Pancreas (tissue), 10 donors: ENCODE measurements at regions of chr1 and their contacts with region 1.

Region 1: GRCh38 chr1:180851995-180852887 is 60.5 kb upstream of the KIAA1614 start:
- DNase-seq: no peak
- ATAC-seq: no peak
- H3K4me3 ChIP-seq: no peak overlapping the region
- H3K27ac ChIP-seq: no peak overlapping the region
- H3K4me1 ChIP-seq: peaks cover 8 to 45% (median 40%) of the 10 kb centered on the region in 3 donors
- H3K27me3 ChIP-seq: no peaks in the 10 kb centered on the region
- CTCF ChIP-seq: no peak

Region 2: DNA sequence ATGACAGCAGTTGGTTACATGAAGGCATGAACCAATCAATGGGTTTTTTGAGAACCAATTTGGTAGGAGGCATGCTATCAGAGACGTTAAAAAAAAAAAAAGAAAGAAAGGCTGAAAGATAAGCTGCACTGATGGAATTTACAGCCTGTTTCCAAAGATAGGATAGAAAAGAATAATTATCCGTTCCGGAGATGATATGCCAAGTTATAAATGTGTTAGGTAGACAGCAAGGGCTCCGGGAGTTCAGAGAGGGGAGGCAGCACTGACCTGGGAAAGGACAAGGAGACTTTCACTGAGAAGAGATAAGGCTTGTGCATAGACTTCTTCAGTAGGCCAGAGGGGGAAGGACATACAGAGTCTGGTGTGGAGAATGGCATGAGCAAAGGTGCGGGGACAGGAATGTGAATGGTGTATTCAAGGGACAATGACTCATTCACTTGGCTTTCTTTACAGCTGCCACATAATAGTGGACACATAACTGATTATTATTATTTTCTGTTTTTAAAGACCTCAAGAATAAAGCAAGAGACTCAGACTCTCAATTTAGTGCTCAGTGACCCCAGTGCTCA is 325.1 kb before region 1 on chr1:
- intact Hi-C with region 1: loop called in 1 of 3 experiments (anchors 10 kb)
- DNase-seq: no peak
- ATAC-seq: peak in 2 of 4 donors; percentile 33 to 61
- H3K4me3 ChIP-seq: no peak overlapping the region
- H3K27ac ChIP-seq: no peak overlapping the region
- H3K4me1 ChIP-seq: peaks cover 0 to 6% (median 5%) of the 10 kb centered on the region in 3 donors
- H3K27me3 ChIP-seq: no peaks in the 10 kb centered on the region
- CTCF ChIP-seq: no peak

Region 3: GRCh38 chr1:180800945-180801344 is 51.3 kb before region 1 on chr1:
- intact Hi-C with region 1: no loop called
- DNase-seq: no peak
- ATAC-seq: peak in 1 of 4 donors; percentile 18
- H3K4me3 ChIP-seq: no peak overlapping the region
- H3K27ac ChIP-seq: no peak overlapping the region
- H3K4me1 ChIP-seq: no peaks in the 10 kb centered on the region
- H3K27me3 ChIP-seq: no peaks in the 10 kb centered on the region
- CTCF ChIP-seq: no peak